Dendritic cell treated with granulocyte-macrophage colony-stimulating factor and Interleukin-4, amounts not matched to agents 40 ng/mL and 50 ng/mL, for 4 days (primary cell): ENCODE measurements at regions of chr3 and their contacts with region 1.

Region 1: DNA sequence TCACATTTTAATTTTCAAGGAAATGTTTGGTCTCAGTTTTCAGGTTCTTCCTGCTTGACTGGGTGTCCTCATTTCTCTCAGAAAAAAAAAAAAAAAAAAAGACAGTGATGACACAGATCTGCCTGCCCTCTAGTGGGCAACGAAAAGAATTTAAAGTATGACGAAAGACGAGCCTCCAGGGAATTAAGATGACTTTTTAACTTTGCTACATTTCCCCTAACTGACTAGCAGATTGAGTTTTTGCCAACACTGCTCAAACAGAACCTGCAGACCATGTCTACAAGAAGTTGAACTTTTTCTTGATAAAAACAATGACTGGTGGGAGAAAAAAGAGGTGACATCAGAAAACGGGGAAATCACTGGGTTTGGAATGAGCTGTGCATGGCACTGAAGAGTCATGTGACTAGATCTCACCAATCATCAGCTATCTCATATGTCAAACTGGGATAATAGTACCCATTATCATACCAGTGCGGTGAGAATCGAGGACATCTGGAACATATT is 40.8 kb downstream of the EOMES start:
- H3K4me3 Mint-ChIP-seq: peak overlapping the region; percentile 64
- H3K27ac Mint-ChIP-seq: peak overlapping the region; percentile 70
- H3K4me1 Mint-ChIP-seq: peaks cover 15% of the 10 kb centered on the region
- H3K27me3 Mint-ChIP-seq: peaks cover 2% of the 10 kb centered on the region

Region 2: DNA sequence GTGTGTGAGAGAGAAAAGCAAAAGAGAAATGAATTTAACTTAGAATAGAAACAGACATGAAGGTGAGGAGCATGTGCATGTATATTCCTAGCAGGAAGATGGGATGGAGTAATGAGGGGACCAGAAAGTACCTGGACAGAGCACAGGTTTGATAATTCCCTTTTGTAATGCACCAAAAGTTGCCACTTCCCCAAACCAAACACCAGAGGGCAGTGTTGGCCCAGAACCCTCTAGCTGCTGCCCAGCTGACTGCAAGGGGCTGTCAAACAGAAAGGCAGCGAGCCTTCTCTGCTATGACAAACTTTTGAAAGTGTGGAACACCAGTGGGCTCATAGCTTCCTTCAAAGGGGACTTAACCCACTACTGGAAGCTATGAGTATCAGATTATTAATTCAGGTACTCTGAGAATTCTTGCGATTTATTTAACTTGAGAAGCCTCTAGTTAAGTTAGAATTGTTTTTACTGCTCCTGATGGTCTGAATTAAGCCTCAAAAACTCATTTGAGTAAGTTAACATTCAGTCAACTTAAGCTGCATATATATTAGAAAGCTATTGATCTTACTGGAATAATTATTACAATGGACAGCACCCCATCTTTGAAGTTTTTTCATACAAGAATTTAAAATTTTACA is 547.0 kb before region 1 on chr3:
- intact Hi-C with region 1: loop called (anchors 10 kb)
- H3K4me3 Mint-ChIP-seq: no peak overlapping the region
- H3K27ac Mint-ChIP-seq: no peak overlapping the region
- H3K4me1 Mint-ChIP-seq: no peaks in the 10 kb centered on the region
- H3K27me3 Mint-ChIP-seq: peaks cover 2% of the 10 kb centered on the region

Region 3: GRCh38 chr3:27312044-27312668 is 369.1 kb before region 1 on chr3:
- intact Hi-C with region 1: loop called (anchors 5 kb)
- H3K4me3 Mint-ChIP-seq: no peak overlapping the region
- H3K27ac Mint-ChIP-seq: no peak overlapping the region
- H3K4me1 Mint-ChIP-seq: peaks cover 4% of the 10 kb centered on the region
- H3K27me3 Mint-ChIP-seq: peaks cover 1% of the 10 kb centered on the region

Region 4: DNA sequence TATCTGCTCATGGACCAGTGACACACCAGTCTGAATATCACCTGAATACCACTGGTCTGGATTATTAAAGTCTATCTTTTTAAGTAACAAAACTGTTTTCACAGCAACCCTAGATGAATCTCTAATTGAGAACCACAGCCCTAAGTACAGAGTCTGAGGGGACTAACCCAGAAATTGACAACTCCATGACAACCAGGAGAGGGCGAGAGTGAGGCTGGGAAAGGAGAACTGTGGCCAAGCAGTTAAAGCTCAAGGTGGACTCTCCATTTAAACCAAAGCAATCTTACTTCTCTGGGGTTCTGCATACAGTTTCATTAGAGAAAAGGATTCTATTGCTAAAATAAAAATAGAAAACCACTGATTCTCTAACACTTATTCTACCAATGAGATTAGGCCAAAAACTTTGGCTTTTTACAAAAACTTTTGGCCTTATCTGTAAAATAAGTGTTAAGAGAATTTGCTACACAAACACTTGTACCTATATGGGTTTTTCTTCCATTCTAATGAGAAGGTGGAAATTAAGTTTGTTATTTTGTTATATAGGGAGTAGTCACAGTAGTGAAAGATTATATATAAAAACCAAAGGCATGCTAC is 323.5 kb before region 1 on chr3:
- intact Hi-C with region 1: loop called (anchors 1 kb)
- H3K4me3 Mint-ChIP-seq: no peak overlapping the region
- H3K27ac Mint-ChIP-seq: no peak overlapping the region
- H3K4me1 Mint-ChIP-seq: peaks cover 13% of the 10 kb centered on the region
- H3K27me3 Mint-ChIP-seq: no peaks in the 10 kb centered on the region

Region 5: DNA sequence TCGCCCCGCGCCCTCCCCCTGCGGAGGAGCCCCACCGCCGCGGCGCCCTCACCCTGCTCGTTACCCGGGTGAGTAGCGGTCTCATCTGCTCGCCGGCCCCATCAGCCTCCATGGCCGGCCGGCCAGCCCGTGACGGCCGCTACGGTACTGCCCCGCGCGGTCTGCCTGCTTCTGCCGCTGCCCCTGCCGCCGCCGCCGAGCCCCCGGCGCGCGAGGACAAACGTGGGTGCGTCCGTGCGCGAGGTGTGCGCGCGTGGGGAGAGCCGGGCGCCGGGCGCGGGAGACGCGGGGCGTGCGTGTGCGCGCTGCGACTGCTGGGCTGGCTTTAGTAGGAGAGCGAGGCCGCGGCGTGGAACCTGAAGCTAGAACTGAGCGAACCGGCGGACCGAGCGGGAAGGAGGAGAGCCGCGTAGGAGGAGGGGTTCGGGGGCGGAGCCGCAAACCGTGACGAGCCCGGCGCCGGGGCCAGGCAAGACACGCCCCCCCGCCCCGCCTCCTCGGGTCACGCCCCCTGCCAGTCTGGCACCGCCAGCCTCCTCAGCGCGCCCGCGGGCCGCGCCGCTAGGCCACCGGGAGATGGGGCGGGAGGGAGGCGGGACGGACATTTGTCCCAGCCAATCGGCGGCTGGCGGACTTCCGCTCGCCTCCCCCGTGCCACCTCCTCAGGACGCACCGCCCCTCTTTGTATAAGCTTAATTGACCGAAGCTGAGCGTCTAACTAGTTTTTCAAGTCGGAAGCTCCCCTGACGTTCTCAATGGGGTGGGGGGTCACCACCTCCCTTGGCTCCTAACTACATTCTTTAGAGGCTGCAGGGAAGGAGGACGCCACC is 197.1 kb before region 1 on chr3 and contains the start of gene SLC4A7:
- intact Hi-C with region 1: loop called (anchors 2 kb)
- H3K4me3 Mint-ChIP-seq: peak within 1 kb of the TSS; percentile 95
- H3K27ac Mint-ChIP-seq: peak within 1 kb of the TSS; percentile 96
- H3K4me1 Mint-ChIP-seq: peaks cover 18% of the 10 kb centered on the region
- H3K27me3 Mint-ChIP-seq: no peaks in the 10 kb centered on the region